ENCODE measurements at regions of chr9 and their contacts with region 1.

Region 1: DNA sequence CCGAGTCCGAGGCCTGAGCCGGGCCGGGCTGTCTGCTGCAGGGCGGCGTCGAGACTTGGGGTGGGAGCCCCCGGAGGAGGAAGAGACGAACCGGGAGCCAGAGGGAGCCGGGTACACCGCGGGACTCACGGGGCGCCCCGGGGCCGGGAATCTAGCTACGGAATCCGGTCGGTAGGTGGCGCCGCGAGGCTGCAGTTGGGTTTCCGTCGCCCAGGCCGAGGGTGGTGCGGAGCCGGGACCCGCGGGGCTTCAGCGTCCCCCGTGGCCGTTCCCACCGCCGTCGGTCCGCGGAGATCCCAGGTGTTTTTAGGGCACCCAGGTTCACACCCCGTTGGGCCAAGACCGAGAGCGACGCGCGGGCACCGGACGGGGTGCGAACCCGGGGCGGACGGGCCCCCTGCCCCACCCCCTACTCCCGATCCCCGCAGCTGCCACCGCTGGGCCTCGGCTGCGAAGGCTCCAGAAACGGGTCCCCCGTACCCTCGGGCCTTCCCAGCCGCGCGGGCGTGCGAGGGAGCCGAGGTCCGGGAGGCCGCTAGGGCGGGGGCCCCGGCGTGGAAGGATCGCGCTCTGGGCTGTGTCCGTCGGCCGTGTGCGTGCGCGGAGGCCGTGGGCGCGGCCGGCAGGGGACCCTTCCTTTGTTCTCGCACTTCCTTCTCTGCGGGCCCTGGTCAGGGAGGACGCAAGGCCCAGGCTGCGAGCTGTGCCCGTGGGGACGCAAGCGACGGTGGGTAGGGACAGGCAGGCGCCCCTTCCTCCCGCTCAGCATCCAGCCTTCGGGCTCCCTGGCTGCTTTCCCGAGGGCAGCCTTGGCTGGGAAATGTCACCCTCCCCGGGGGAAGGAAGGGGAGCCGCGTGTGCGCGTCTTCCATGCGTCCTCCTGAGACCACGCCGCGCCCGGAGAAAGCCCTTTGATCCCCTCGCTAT is 146.6 kb downstream of the GAPVD1 start:
- DNase-seq: peak in 1 of 2 experiments; percentile 95
- H3K4me3 ChIP-seq: peak overlapping the region; percentile 32 to 69 (median 52)
- H3K27ac ChIP-seq: no peak overlapping the region; the same call in 1 of the 2 replicates
- H3K4me1 ChIP-seq: peaks cover 0 to 2% (median 0%) of the 10 kb centered on the region in 4 experiments; a peak in 2 of 7 replicates
- H3K27me3 ChIP-seq: peaks cover 0 to 13% (median 7%) of the 10 kb centered on the region in 4 experiments; a peak in 5 of 7 replicates
- CTCF ChIP-seq: peak in 2 of 3 experiments; percentile 80 to 92; a peak in 3 of 4 replicates
- EP300 ChIP-seq: 0 out of 3 replicates have a peak, but pooled peaks of 1 of the 2 experiments have one; percentile 3
- POLR2A ChIP-seq: no peak; a peak in 1 of 3 replicates
- RAD21 ChIP-seq: peak; percentile 93 to 94

Region 2: DNA sequence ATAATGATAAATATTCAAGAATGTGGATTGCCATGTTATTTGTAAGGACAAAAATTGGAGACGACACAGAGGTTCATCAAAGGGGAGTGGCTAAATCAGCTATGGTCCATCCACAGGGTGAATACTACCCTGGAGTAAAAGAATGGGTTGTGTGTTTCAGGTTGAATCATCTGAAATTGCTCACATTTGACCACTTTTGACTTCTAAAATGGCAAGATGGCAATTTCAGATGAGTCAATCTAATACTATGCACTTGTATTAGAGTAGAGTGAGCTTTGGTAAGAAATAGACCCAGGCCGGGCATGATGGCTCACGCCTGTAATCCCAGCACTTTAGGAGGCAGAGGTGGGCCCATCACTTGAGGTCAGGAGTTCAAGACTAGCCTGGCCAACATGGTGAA is 14.8 kb before region 1 on chr9:
- CTCF ChIA-PET with region 1: interaction called, 12 read pairs
- POLR2A ChIA-PET with region 1: no interaction called
- DNase-seq: no peak
- H3K4me3 ChIP-seq: no peak overlapping the region
- H3K27ac ChIP-seq: no peak overlapping the region
- H3K4me1 ChIP-seq: peaks cover 0 to 2% (median 0%) of the 10 kb centered on the region in 4 experiments; a peak in 1 of 7 replicates
- H3K27me3 ChIP-seq: no peaks in the 10 kb centered on the region; a peak in 1 of 7 replicates
- CTCF ChIP-seq: no peak
- EP300 ChIP-seq: no peak
- POLR2A ChIP-seq: no peak
- RAD21 ChIP-seq: no peak

Region 3: DNA sequence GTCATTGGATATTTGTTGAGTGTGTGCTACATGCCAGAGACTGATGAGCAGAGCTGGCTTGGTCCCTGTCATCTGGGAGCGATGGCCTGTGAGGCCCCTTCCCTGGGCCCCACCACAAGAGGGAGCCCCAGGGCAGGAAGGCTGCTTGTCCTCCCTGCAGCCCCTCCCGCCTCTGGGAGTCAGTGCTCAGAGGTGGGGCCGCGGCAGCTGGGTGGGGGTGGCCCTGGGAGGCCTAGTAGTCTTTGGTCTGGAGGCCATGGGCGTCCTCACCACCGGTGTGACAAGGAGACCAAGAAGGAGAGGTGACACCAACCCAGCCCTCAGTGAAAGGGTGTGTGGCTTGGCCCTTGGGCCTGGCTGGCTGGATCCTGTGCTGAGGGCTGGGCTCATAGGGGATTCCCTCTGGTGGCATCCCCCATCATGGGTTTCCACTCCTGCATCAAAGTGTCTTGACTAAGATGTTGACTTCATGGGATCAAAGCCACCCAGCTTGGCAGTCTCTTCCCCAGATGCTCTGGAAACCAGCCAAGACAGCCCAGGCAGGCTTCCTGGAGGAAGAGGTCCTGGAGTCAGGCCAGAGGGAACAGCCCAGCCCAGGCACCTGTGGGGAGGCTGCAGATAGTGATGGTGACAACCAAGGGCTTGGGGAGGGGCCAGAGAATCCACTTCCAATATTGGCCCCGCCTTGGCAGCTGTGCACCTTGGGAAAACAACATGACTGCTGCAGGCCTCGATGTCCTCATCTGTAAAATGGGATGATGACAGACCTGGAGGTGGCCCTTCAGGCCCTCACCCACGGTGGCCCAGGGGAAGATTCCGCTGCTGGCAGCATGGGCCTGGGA is 20.0 kb after region 1 on chr9:
- CTCF ChIA-PET with region 1: interaction called, 14 read pairs
- POLR2A ChIA-PET with region 1: interaction called, 4 read pairs
- DNase-seq: peak in 1 of 2 experiments; percentile 84
- H3K4me3 ChIP-seq: no peak overlapping the region
- H3K27ac ChIP-seq: no peak overlapping the region
- H3K4me1 ChIP-seq: peaks cover 0 to 8% (median 3%) of the 10 kb centered on the region in 4 experiments; a peak in 5 of 7 replicates
- H3K27me3 ChIP-seq: no peaks in the 10 kb centered on the region
- CTCF ChIP-seq: peak in 2 of 3 experiments; percentile 59 to 78; a peak in 2 of 4 replicates
- EP300 ChIP-seq: no peak
- POLR2A ChIP-seq: no peak
- RAD21 ChIP-seq: peak; percentile 83 to 85

Measured in H1 (cell line).